Right ventricle myocardium superior (tissue), 1 donor: ENCODE measurements at regions of chr1 and their contacts with region 1.

Region 1: DNA sequence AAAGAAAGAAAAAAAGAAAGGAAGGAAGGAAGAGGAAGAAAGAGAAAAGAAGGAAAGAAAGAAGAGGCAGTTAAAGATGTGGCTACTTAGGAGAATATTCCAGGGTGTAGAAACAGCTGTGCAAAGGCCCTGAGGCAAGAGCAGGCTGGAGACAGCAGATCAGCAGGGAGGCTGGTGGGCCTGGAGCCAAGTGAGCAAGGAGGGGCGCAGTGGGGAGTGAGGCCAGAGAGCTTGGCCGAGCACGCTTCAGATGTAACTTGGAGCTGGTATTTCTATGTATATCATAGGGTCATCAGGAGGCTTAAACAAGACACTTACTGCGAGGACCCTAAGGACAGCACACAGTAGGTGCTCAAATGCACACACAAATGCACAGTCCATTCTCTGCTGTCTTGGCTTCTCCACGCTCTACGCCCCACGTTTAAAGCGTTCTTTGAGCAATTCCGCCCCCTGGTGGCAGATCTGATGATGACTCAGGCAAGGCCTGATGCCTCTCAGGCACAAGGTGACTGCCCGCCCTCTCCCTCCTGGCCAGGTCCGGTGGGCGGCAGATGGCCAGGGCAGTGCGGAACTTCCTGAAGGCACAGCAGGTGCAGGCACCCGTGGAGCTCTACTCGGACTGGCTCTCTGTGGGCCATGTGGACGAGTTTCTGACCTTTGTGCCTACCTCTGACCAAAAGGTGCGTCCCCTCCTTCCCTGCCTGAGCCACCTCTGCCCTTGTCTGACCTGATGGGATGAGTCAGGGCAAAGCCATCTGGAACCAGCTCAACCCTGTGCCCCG is 11.9 kb upstream of the PADI3 start:
- DNase-seq: peak; percentile 90
- ATAC-seq: peak; percentile 88

Region 2: GRCh38 chr1:17059739-17060460 is 177.1 kb before region 1 on chr1:
- intact Hi-C with region 1: loop called (anchors 2 kb)
- DNase-seq: peak; percentile 73
- ATAC-seq: peak; percentile 92

Region 3: DNA sequence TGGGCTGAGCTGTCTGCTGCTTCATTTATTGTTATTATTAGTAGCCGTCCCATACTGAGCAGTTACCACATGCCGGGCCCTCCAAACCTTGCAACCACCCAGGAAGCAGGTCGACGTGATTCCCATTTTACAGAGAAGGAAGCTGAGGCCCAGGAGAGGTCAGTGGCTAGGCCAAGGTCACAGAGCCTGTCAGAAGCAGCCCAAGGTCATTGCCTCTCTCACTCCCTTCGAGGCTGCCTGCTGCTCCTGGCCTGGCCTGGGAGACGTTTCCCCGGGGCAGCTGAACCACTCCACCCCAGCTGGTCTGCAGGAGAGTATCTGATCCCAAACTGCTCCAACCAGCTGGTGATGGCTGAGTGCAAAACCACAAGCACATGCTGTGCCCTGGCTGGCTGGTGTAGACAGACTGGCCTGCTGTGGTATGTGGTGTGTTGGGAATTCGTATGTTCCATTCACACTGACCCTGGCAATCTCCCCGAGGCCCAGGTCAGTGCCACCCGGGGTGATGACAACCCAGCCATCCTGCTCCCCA is 77.6 kb after region 1 on chr1:
- intact Hi-C with region 1: no loop called
- DNase-seq: no peak
- ATAC-seq: no peak